ENCODE measurements at regions of chr1 and their contacts with region 1.

Region 1: DNA sequence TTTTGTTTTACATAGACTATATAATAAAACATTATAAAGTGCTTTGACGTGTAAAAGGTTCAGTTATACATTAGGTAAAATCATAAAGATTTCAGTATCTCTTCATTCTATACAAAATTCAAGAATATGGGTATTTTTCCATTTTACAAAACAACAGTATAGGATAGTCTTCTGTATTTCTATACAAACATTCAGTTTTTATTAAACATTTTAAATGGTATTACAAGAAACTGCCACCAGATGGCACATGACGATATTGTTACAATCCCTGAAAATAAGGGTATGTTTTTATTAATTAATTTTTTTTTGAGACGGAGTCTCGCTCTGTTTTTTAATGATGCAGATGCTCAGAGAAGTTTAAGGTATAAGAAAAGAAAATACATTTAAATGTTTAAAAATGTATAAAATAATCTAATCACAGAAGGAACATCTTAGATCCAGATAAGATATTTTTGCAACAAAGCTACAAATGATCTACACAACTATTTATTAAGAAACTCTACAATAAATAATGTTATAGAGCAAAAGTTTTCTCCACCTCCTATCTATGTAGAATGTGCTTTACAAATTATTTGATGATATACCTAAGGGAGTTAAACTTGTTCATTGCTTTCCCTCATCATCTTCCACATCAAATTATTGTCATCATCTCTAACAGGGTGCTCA is 23.5 kb upstream of the RSBN1 start:
- DNase-seq: no peak
- ATAC-seq: peak; percentile 45; the same call in 2 of the 3 replicates
- H3K4me3 ChIP-seq: no peak overlapping the region
- H3K27ac ChIP-seq: no peak overlapping the region
- H3K4me1 ChIP-seq: no peaks in the 10 kb centered on the region
- H3K27me3 ChIP-seq: no peaks in the 10 kb centered on the region
- CTCF ChIP-seq: peak; percentile 9 to 51 (median 25); a peak in 4 of 6 replicates
- EP300 ChIP-seq: no peak
- POLR2A ChIP-seq: no peak
- RAD21 ChIP-seq: peak; percentile 69

Region 2: DNA sequence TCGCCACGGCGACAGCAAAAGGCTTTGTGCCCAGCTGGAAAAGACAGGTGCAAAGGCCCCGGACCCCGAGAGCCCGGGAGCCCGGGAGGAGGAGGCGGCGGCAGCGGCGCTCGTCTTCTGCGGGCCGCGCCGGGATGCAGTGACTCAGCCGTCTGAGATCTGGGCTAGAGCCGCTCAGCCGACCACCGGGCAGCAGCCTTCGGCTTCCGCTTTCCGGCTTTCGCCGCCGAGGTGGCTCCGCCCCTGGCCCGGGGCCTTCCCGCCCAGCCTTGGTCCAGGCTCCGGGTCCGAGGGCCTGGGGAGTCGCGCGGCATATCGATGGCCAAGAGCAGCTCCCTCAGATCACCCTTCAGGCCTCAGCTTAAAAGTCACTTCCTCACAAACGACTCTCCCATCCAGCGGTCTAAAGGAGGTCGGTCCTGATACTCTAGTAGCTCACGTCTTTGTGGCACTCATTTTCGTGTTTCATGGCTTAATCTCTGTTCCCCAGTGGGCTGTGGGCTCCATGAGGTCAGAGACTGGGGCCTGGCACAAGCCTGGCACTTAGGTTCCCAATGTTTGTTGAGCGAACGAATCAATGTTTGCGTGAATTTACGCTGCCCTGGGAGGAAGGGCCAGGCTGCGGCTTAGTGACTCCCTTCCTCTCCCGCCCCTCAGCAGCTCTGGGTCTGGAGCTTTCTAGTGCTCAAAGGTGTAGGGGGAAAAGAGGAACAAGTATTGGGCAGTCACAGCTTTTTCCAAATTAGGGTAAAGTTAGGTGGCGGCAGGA is 76.3 kb before region 1 on chr1 and contains the start of gene PHTF1:
- CTCF ChIA-PET with region 1: interaction called, 11 read pairs
- POLR2A ChIA-PET with region 1: no interaction called
- RAD21 ChIA-PET with region 1: interaction called, 3 read pairs
- SMC1A ChIA-PET with region 1: interaction called, 7 read pairs
- in situ Hi-C with region 1: no loop called
- intact Hi-C with region 1: no loop called
- DNase-seq: no peak
- ATAC-seq: peak; percentile 91
- H3K4me3 ChIP-seq: peak within 1 kb of the TSS; percentile 85
- H3K27ac ChIP-seq: peak within 1 kb of the TSS; percentile 94
- H3K4me1 ChIP-seq: no peaks in the 10 kb centered on the region; the same call in 1 of the 2 replicates
- H3K27me3 ChIP-seq: no peaks in the 10 kb centered on the region
- CTCF ChIP-seq: no peak
- EP300 ChIP-seq: no peak
- POLR2A ChIP-seq: peak; percentile 89
- RAD21 ChIP-seq: no peak
- polyA plus RNA-seq, gene PHTF1: 7.8 to 12.6 TPM

Region 3: GRCh38 chr1:113871597-113872113 is 35.9 kb after region 1 on chr1 and contains the start of gene PTPN22:
- CTCF ChIA-PET with region 1: interaction called, 21 read pairs
- POLR2A ChIA-PET with region 1: no interaction called
- RAD21 ChIA-PET with region 1: interaction called, 18 read pairs
- SMC1A ChIA-PET with region 1: interaction called, 17 read pairs
- in situ Hi-C with region 1: no loop called
- intact Hi-C with region 1: no loop called
- DNase-seq: peak; percentile 90
- ATAC-seq: peak; percentile 87
- H3K4me3 ChIP-seq: peak within 1 kb of the TSS; percentile 89
- H3K27ac ChIP-seq: peak within 1 kb of the TSS; percentile 79
- H3K4me1 ChIP-seq: peaks cover 47% of the 10 kb centered on the region
- H3K27me3 ChIP-seq: no peaks in the 10 kb centered on the region
- CTCF ChIP-seq: no peak
- EP300 ChIP-seq: peak in 1 of 2 experiments; percentile 86; a peak in 3 of 4 replicates
- POLR2A ChIP-seq: peak; percentile 90
- RAD21 ChIP-seq: no peak
- polyA plus RNA-seq, gene PTPN22: 30.3 to 32.3 TPM

Region 4: DNA sequence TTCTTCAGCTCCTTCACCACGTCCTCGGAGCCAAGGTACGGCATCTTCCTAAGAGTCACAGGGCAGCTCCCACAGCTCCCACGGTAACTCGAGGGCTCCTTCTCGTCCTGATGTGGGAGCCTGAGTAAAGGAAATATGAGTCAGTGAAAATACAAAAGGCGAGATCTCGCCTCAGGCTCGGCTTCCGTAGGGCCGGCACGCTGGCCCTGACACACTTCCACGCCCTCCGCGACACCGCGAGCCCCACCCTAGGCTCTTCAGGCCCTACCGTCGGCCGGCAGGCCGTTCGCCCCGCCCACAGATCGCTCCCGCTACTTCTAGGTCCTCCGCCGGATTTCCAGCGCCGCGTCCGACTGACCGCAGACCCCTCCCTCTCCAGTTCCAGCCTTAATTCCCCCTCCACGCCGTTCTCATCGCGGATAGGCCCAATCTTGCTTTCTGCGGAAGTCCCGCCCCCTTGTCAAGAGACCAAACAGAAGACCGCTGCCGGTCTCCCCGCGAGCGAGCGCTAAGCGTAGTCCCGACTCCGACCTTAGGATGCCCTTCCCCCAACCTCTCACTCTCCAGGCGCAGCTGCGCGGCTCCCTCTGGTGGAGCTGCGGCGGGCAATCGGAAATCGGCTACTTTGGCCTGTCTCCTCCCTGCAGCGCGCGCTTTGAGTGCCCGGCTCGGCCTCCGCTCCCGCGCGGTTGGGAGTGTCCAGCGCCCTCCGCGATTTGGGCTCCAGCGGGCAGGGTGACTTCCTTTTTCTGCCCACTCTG is 69.1 kb after region 1 on chr1 and contains the starts of genes AP4B1 and DCLRE1B:
- CTCF ChIA-PET with region 1: interaction called, 74 read pairs
- POLR2A ChIA-PET with region 1: interaction called, 6 read pairs
- RAD21 ChIA-PET with region 1: interaction called, 46 read pairs
- SMC1A ChIA-PET with region 1: interaction called, 53 read pairs
- in situ Hi-C with region 1: loop called (anchors 5 kb)
- intact Hi-C with region 1: loop called (anchors 1 kb)
- DNase-seq: peak; percentile 99
- ATAC-seq: peak; percentile 94
- H3K4me3 ChIP-seq: peak within 1 kb of the TSS; percentile 91
- H3K27ac ChIP-seq: peak within 1 kb of the TSS; percentile 88
- H3K4me1 ChIP-seq: peaks cover 3% of the 10 kb centered on the region
- H3K27me3 ChIP-seq: no peaks in the 10 kb centered on the region
- CTCF ChIP-seq: peak; percentile 63 to 98 (median 67)
- EP300 ChIP-seq: peak in 1 of 2 experiments; percentile 69; a peak in 1 of 4 replicates
- POLR2A ChIP-seq: peak; percentile 77
- RAD21 ChIP-seq: peak; percentile 93
- polyA plus RNA-seq, gene AP4B1: 27.2 to 29.0 TPM
- polyA plus RNA-seq, gene DCLRE1B: 5.4 to 7.4 TPM

Region 5: GRCh38 chr1:113963281-113963906 is 127.6 kb after region 1 on chr1:
- CTCF ChIA-PET with region 1: interaction called, 19 read pairs
- POLR2A ChIA-PET with region 1: no interaction called
- RAD21 ChIA-PET with region 1: interaction called, 14 read pairs
- SMC1A ChIA-PET with region 1: interaction called, 8 read pairs
- in situ Hi-C with region 1: no loop called
- intact Hi-C with region 1: no loop called
- DNase-seq: no peak
- ATAC-seq: no peak
- H3K4me3 ChIP-seq: no peak overlapping the region
- H3K27ac ChIP-seq: no peak overlapping the region
- H3K4me1 ChIP-seq: no peaks in the 10 kb centered on the region
- H3K27me3 ChIP-seq: no peaks in the 10 kb centered on the region
- CTCF ChIP-seq: peak in 1 of 3 experiments; percentile 31; a peak in 2 of 6 replicates
- EP300 ChIP-seq: no peak
- POLR2A ChIP-seq: no peak
- RAD21 ChIP-seq: peak; percentile 36; the same call in 1 of the 2 replicates

Region 6: GRCh38 chr1:114282751-114283403 is 447.1 kb after region 1 on chr1:
- CTCF ChIA-PET with region 1: interaction called, 5 read pairs
- POLR2A ChIA-PET with region 1: no interaction called
- RAD21 ChIA-PET with region 1: interaction called, 4 read pairs
- SMC1A ChIA-PET with region 1: interaction called, 12 read pairs
- in situ Hi-C with region 1: loop called (anchors 10 kb)
- intact Hi-C with region 1: loop called (anchors 10 kb)
- DNase-seq: peak; percentile 36
- ATAC-seq: peak; percentile 100
- H3K4me3 ChIP-seq: no peak overlapping the region
- H3K27ac ChIP-seq: no peak overlapping the region
- H3K4me1 ChIP-seq: no peaks in the 10 kb centered on the region
- H3K27me3 ChIP-seq: no peaks in the 10 kb centered on the region; a peak in 1 of 4 replicates
- CTCF ChIP-seq: peak; percentile 80 to 89 (median 88)
- EP300 ChIP-seq: no peak
- POLR2A ChIP-seq: no peak
- RAD21 ChIP-seq: peak; percentile 88